ENCODE measurements at regions of chr4 and their contacts with region 1.

Region 1: DNA sequence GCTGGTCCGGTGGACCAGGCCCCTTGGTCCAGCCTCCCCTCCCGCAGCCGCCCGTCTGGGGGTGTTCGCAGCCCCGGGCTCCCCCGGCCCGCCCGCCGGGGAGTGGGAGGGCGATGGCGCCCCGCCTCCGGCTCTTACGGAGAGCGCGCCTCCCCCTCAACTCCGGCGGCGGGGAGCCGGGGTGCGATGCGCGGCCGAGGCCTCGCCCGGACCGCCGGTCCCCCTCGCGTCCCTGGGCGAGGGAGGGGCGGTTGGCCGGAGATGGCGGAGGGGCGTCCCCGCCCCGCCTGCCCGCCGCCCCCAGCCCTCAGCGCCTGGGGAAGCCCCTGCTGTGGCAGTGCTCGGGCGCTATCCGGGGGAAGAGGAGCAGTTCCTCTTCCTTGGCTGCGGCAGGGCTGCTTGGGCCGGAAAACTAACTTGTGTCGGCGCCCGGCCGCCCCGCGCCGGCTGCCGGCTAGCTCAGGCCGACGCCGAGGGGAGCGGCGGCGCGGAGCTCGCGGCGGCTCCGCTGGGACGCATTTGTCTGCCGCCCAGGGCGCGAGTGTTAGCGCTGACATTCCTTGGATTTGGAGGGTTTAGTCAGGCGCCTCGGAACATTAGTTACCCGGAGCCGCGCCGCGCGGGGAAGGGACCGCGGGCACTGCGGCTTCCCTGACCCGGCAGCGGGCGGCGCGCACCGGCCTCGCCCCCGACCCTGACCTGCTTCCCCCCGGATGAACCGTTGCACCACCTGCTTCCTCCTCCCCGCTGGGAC is 994 bp downstream of the GALNT7 start:
- DNase-seq: peak; percentile 83 to 95 (median 93)
- H3K4me3 ChIP-seq: peak overlapping the region; percentile 86 to 97 (median 90)
- H3K27ac ChIP-seq: peak overlapping the region; percentile 72 to 92
- H3K4me1 ChIP-seq: peaks cover 44 to 61% (median 53%) of the 10 kb centered on the region in 4 experiments
- H3K27me3 ChIP-seq: no peaks in the 10 kb centered on the region

Region 2: GRCh38 chr4:173185847-173186510 is 16.4 kb after region 1 on chr4:
- CTCF ChIA-PET with region 1: interaction called, 13 read pairs
- POLR2A ChIA-PET with region 1: interaction called, 5 read pairs
- DNase-seq: peak in 2 of 3 donors; percentile 48 to 67
- H3K4me3 ChIP-seq: peak overlapping the region in 3 of 7 experiments; percentile 7 to 69 (median 25)
- H3K27ac ChIP-seq: peak overlapping the region in 1 of 2 experiments; percentile 1
- H3K4me1 ChIP-seq: peaks cover 21 to 45% (median 27%) of the 10 kb centered on the region in 4 experiments
- H3K27me3 ChIP-seq: no peaks in the 10 kb centered on the region

Region 3: DNA sequence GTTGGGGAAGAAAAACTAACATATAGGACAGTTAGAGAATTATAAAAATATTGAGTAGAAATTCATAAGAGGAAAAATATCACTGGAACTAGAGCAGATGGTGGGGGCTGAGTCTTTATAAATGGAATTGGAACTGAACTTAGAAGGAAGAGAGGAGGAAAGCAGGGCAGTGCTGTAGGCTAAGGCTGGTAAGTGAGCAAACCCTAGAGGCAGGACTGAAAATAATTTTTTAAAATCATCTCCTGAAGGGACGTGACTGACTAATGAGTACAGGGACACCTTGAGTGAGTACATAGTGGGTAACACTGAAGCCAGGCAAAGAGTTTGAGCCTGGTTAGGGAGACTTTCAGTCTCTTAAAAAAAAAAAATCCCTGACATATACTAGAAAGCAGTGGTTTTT is 62.3 kb after region 1 on chr4:
- CTCF ChIA-PET with region 1: interaction called, 10 read pairs
- POLR2A ChIA-PET with region 1: no interaction called
- DNase-seq: peak; percentile 52 to 72 (median 65)
- H3K4me3 ChIP-seq: peak overlapping the region in 1 of 7 experiments; percentile 14
- H3K27ac ChIP-seq: peak overlapping the region; percentile 13 to 69
- H3K4me1 ChIP-seq: peaks cover 9 to 50% (median 35%) of the 10 kb centered on the region in 4 experiments
- H3K27me3 ChIP-seq: no peaks in the 10 kb centered on the region

Region 4: DNA sequence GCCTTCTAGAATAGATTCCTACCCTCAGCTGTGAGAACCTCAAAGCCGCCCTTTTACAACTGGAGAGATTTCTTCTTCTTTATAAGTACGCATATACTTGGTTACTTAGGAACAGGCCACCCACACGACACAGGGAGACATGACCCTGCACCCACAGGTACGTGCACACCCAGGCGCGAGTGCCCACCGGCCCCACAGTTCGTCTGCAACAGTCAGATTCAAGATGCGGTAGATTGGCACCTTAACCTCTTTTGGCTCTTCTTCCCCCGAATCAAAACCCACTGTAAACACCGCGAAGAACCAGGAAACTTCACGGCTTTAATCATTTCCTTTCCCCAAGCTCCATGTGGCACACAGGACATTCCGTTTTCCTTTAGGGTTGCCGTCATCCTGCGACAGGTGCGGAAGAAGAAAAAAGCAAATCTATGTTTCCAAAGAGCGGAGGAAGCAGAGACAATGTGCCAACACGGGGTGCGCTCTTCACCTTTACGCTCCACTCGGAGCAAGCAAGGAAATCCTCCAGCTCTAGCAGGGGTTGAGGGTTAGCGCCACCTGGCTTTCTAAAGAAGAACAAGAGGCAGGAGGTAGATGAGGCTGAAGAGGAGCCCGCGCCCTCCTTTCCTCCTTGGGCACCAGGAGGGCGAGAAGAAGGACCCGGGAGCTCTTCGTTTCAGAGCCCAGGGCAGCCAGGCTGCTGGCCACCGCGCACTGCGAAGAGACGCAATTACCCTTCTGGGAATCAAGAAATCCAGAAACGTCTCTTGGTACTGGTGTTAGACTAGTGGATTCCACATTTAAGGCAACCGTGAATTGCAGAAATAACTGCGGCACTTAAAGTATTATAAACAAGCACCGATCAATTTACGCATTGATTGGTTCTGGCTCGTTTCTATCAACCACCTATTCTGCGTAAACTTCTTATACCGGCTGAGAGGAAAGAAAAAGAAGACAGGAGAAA is 324.7 kb after region 1 on chr4:
- CTCF ChIA-PET with region 1: no interaction called
- POLR2A ChIA-PET with region 1: no interaction called
- DNase-seq: peak; percentile 74 to 82 (median 78)
- H3K4me3 ChIP-seq: peak overlapping the region; percentile 13 to 81 (median 58)
- H3K27ac ChIP-seq: no peak overlapping the region
- H3K4me1 ChIP-seq: peaks cover 7 to 36% (median 26%) of the 10 kb centered on the region in 4 experiments
- H3K27me3 ChIP-seq: peaks cover 8 to 60% (median 12%) of the 10 kb centered on the region in 5 experiments

Measured in common myeloid progenitor, CD34-positive (primary cell).